Endothelial cell of umbilical vein (primary cell): ENCODE measurements at regions of chr2 and their contacts with region 1.

Region 1: DNA sequence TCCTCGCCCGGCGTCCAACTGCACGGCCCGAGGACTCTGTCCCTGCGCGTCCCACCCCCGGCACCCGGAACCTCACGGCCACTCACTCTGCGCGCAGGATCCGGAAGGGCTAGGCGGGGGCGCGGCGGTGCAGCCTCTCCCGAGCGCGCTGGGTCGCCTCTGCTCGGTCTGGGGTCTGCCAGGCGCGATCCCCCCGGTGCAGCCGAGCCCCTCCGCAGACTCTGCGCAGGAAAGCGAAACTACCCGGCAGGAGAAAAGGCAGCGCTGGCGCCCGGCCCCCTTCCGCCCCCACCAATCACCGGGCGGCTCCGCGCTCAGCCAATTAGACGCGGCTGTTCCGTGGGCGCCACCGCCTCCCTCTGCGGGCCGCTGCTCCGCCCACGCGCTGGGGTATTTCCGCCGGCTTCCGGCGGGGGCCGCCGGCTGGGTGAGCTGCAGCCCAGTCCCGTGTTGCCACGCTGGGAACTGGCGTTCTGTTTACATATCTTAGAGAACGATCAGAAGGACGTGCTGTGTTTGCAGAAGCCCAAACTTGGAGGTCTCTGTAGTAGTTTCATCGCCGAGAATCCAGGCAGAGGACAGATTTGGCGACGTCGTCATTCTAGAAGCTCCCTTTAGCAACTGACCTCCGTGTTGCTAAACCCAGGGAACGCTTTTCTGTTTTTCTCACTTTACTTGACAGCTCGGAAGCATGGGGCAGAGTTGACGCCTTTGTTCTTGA is at the start of gene STAT1:
- DNase-seq: peak; percentile 92
- H3K4me3 ChIP-seq: peak within 1 kb of the TSS; percentile 50 to 94 (median 78)
- H3K27ac ChIP-seq: peak within 1 kb of the TSS; percentile 64
- H3K4me1 ChIP-seq: peaks cover 16% of the 10 kb centered on the region
- H3K27me3 ChIP-seq: no peaks in the 10 kb centered on the region
- CTCF ChIP-seq: no peak
- POLR2A ChIP-seq: peak; percentile 96
- total RNA-seq, gene STAT1: 59.2 and 67.6 TPM in 2 replicates

Region 2: GRCh38 chr2:190947711-190948251 is 66.3 kb before region 1 on chr2:
- CTCF ChIA-PET with region 1: interaction called, 3 read pairs
- POLR2A ChIA-PET with region 1: no interaction called
- dilution Hi-C with region 1: no loop called
- intact Hi-C with region 1: loop called (anchors 5 kb)
- DNase-seq: peak; percentile 93
- H3K4me3 ChIP-seq: peak overlapping the region in 1 of 3 experiments; percentile 33
- H3K27ac ChIP-seq: peak overlapping the region; percentile 78
- H3K4me1 ChIP-seq: peaks cover 31% of the 10 kb centered on the region
- H3K27me3 ChIP-seq: no peaks in the 10 kb centered on the region
- CTCF ChIP-seq: no peak
- POLR2A ChIP-seq: peak; percentile 29

Region 3: DNA sequence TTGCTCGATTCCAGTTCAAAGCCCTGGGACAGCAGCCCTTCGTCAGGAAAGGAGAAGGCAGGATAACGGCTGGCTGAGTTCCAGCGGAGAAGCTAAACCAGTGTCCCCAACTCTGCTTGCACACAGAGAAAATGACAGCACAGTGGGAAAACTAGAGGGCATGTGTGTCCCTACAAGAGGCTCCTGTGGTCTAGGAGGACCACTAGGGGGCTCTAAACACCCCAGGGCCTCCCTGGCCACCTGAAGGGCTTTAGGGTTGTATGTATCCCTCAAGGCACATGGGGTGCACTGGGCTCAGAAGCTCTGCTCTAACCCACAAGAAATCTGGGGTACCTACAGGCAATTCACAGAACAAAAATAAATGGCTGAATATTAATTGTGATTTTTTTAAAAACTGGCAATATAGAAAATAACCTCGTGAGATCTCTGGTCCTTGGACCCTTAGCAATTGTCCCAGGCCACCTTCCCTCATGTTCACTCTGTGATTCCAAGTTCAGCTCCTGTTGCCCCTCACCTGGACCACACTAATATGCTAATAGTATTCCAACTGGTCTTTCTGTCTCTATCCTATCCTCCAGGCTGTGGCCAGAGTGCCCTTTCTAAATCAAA is 17.6 kb before region 1 on chr2:
- CTCF ChIA-PET with region 1: interaction called, 4 read pairs
- POLR2A ChIA-PET with region 1: no interaction called
- dilution Hi-C with region 1: no loop called
- intact Hi-C with region 1: loop called (anchors 1 kb)
- DNase-seq: peak; percentile 48
- H3K4me3 ChIP-seq: no peak overlapping the region
- H3K27ac ChIP-seq: no peak overlapping the region
- H3K4me1 ChIP-seq: no peaks in the 10 kb centered on the region
- H3K27me3 ChIP-seq: no peaks in the 10 kb centered on the region
- CTCF ChIP-seq: peak; percentile 74 to 86
- POLR2A ChIP-seq: no peak